Naive thymus-derived CD8-positive, alpha-beta T cell (primary cell): ENCODE measurements at regions of chr12 and their contacts with region 1.

Region 1: GRCh38 chr12:45215419-45216229 is at the start of gene ANO6:
- DNase-seq: peak; percentile 53 to 83 (median 70)
- ATAC-seq: peak; percentile 77 to 82
- H3K4me3 Mint-ChIP-seq: peak within 1 kb of the TSS; percentile 95 to 100 (median 98)
- H3K27ac Mint-ChIP-seq: peak within 1 kb of the TSS; percentile 91 to 97 (median 94)
- H3K4me1 Mint-ChIP-seq: peaks cover 15 to 60% (median 48%) of the 10 kb centered on the region in 4 donors
- H3K27me3 Mint-ChIP-seq: no peaks in the 10 kb centered on the region
- polyA plus RNA-seq, gene ANO6: 13.4 to 18.6 (median 18.0) TPM

Region 2: DNA sequence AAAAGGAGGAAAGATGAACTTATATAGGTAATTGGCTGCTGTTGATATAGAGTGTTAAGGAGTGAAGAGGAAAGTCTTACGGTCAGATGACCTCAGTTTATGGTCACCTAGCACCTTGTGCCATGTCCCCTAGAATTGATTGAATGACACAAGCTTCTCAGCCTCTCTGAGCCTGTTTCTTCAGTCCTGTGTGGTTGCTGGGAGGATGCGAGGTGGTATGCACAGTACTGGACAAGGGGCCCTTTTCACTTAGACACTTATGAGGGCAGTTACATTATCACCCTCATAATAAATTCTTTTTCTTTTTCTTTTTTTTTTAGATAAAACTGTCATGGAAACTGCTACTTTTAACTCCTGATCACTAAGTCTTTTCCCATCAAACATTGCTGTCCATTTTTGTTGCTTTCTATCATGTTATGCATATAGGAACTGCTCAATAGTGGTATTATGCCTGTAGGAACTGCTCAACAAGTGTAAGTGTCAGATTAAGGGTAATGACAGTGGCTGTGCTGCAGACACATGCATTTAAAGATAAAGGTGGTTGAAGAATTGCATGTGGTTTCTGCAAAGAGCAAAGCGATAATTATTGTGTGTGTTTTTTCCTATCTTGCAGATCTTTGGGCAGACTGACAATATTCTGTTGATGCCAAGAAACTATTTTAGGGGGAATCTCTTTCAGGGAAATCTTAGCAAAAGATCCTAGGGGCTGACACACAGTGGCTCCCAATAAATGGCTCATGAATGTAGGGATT is 11.9 kb after region 1 on chr12:
- POLR2A ChIA-PET with region 1: interaction called, 11 read pairs
- DNase-seq: no peak
- ATAC-seq: no peak
- H3K4me3 Mint-ChIP-seq: no peak overlapping the region
- H3K27ac Mint-ChIP-seq: no peak overlapping the region
- H3K4me1 Mint-ChIP-seq: peaks cover 14 to 42% (median 16%) of the 10 kb centered on the region in 4 donors
- H3K27me3 Mint-ChIP-seq: no peaks in the 10 kb centered on the region